Activated CD4-positive, alpha-beta T cell treated with anti-CD3 and anti-CD28 coated beads for 36 hours (primary cell): ENCODE measurements at regions of chr12 and their contacts with region 1.

Region 1: DNA sequence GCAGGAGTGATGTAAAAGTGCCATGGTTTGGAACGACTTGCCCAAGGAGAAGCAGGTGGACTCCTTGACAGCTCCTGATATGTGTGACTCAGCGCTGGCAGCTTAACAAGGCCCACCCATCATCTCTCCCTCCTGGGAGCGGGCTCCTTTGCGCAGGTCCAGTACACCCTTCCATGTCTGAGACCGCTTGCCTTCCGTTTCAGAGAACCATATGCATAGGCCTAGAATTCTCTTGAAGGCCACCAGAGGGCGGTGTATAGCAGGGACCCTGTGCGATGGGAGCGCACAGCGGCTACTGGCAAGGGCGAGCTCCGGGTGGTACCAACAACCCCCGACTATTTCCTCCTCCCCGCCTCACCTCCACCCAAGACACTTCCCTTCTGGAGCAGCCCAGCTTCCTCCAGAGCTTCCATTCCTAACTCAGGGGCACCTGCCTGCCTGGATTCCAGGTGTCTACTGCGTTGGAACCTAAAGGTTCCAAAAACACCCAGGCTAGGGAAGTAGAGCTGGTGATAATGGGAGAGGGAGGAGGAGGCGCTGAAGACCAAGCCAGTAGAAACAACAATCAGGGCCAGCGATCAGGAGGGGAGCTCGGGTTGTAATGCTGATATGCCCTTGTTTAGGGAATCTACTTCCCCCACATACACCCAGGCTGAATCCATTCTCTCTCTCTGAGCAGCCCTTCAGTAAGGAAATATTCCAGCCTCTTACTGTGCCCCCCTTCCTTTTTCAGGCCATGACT is 6.2 kb downstream of the DHH start:
- DNase-seq: peak; percentile 82
- ATAC-seq: peak; percentile 91
- H3K4me3 Mint-ChIP-seq: no peak overlapping the region
- H3K27ac Mint-ChIP-seq: no peak overlapping the region
- H3K4me1 Mint-ChIP-seq: peaks cover 35% of the 10 kb centered on the region
- H3K27me3 Mint-ChIP-seq: peaks cover 48% of the 10 kb centered on the region

Region 2: GRCh38 chr12:48882315-48882687 is 206.1 kb before region 1 on chr12:
- CTCF ChIA-PET with region 1: no interaction called
- POLR2A ChIA-PET with region 1: no interaction called
- intact Hi-C with region 1: no loop called
- DNase-seq: no peak
- ATAC-seq: no peak
- H3K4me3 Mint-ChIP-seq: no peak overlapping the region
- H3K27ac Mint-ChIP-seq: no peak overlapping the region
- H3K4me1 Mint-ChIP-seq: peaks cover 7% of the 10 kb centered on the region
- H3K27me3 Mint-ChIP-seq: peaks cover 22% of the 10 kb centered on the region

Region 3: GRCh38 chr12:48977315-48978281 is 110.8 kb before region 1 on chr12:
- CTCF ChIA-PET with region 1: interaction called, 10 read pairs
- POLR2A ChIA-PET with region 1: no interaction called
- intact Hi-C with region 1: loop called (anchors 1 to 5 kb)
- DNase-seq: peak; percentile 92
- ATAC-seq: peak; percentile 69
- H3K4me3 Mint-ChIP-seq: peak overlapping the region; percentile 42
- H3K27ac Mint-ChIP-seq: peak overlapping the region; percentile 10
- H3K4me1 Mint-ChIP-seq: peaks cover 54% of the 10 kb centered on the region
- H3K27me3 Mint-ChIP-seq: peaks cover 73% of the 10 kb centered on the region

Region 4: DNA sequence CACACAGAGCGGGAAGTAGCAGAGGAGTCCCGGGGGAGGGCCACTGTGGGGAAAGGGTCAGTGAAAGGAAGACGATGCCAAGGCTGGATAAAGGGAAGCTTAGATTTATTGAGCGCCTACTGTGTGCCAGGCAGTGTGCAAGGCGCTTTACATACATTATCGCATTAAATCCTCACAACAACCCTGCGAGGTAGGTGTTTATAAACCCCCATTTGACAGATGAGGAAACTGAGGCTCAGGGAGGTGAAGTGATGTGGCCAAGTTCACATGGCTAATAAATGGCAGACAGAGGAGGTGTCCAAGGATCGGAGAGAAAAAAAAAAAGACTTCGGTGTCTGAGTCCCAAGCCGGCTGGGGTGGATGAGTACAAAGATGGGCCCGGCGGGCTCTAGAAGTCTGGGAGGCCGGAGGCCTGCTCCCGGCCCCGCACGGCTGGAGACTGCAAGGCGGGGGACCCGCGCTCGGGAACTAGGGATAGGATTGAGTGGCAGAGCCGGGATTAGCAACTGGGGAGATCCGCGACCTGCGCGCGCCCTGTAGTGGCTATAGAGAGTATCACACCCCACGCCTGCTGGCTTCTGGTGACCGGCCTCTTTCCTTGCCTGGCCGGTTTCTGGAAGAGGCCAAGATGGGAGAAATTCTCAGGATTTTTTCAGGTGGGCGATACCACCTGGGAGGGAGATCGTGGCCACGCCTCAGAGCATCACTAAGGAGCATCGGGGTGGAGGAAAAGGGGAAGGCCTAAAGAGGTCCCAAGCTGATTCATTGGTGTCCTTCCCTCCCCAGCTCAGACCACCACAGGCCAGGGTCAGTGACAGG is 93.1 kb before region 1 on chr12:
- CTCF ChIA-PET with region 1: interaction called, 12 read pairs
- POLR2A ChIA-PET with region 1: no interaction called
- intact Hi-C with region 1: loop called (anchors 2 to 5 kb)
- DNase-seq: peak; percentile 77
- ATAC-seq: peak; percentile 13
- H3K4me3 Mint-ChIP-seq: no peak overlapping the region
- H3K27ac Mint-ChIP-seq: no peak overlapping the region
- H3K4me1 Mint-ChIP-seq: peaks cover 26% of the 10 kb centered on the region
- H3K27me3 Mint-ChIP-seq: peaks cover 52% of the 10 kb centered on the region

Region 5: DNA sequence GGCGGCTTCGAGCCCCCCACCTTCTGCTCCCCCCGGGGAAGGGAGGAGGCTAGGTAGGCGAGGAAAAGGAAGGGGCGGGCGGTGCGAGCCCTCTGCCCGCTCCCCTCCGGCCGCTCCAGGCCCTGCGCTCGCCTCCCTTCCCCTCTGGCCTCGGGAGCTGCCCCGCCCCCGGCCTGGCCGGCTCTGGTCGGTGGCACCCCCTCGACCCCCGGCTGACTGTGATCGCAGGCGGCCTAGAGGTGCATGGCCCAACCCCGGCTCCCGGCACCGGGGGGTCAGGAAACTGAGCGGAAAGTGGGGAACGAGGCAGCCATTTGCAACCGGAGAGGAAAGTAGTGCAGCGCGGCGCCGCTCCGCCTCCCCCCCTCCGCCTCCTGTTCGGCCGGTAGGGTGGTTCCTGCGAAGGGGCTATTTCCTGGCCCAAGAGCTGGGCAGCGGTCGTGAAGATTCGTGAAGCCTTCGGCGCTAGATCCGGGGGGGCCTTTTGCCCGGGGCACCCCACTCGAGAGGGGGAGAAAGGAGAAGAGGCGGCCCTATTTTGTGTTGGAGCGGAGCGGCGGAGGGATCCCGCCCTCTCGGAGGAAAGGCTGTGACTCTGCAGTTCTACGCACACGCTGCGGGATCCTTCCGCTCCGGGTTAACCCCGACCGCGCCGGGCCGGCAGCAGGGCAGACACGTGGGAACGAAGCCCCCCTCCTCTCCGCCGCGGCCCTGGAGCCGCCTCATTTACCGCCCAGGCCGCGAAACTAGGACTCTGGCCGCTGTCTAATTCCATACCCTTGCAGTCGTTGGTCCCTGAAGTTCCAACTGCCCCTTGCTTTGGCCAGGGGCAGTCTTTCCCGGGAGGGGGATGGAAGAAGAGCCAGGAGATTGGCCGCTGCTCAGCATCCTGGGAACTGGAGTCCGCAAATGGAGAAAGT is 27.9 kb before region 1 on chr12 and contains the start of gene KMT2D:
- CTCF ChIA-PET with region 1: interaction called, 124 read pairs
- POLR2A ChIA-PET with region 1: no interaction called
- intact Hi-C with region 1: loop called (anchors 1 kb)
- DNase-seq: peak; percentile 94
- ATAC-seq: peak; percentile 75
- H3K4me3 Mint-ChIP-seq: peak within 1 kb of the TSS; percentile 98
- H3K27ac Mint-ChIP-seq: peak within 1 kb of the TSS; percentile 95
- H3K4me1 Mint-ChIP-seq: peaks cover 45% of the 10 kb centered on the region
- H3K27me3 Mint-ChIP-seq: no peaks in the 10 kb centered on the region
- total RNA-seq, gene KMT2D: 48.3 to 58.2 TPM

Region 6: DNA sequence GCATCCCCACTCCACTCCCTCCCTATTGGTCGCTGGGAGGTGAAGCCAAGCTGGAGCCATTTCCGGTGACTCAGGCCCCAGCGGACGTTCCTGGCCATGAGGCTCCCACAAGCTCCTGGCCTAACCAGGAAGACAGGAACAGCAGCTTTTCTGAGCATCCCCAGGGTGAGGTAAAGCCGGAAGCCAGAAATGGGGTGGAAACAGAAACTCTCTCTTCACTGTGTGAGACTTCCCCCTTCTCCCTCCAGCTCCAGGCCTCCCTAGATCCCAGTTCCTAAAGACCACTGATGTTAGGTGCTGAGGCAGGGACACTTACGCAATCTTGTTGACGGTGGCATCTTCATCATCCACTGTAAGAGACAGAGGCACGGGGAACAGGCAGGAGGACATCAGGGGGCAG is 17.2 kb after region 1 on chr12:
- CTCF ChIA-PET with region 1: interaction called, 96 read pairs
- POLR2A ChIA-PET with region 1: interaction called, 3 read pairs
- intact Hi-C with region 1: no loop called
- DNase-seq: no peak
- ATAC-seq: no peak
- H3K4me3 Mint-ChIP-seq: no peak overlapping the region
- H3K27ac Mint-ChIP-seq: no peak overlapping the region
- H3K4me1 Mint-ChIP-seq: peaks cover 24% of the 10 kb centered on the region
- H3K27me3 Mint-ChIP-seq: no peaks in the 10 kb centered on the region

Region 7: GRCh38 chr12:49121047-49121696 is 32.8 kb after region 1 on chr12:
- CTCF ChIA-PET with region 1: interaction called, 13 read pairs
- POLR2A ChIA-PET with region 1: no interaction called
- intact Hi-C with region 1: no loop called
- DNase-seq: no peak
- ATAC-seq: peak; percentile 38
- H3K4me3 Mint-ChIP-seq: no peak overlapping the region
- H3K27ac Mint-ChIP-seq: no peak overlapping the region
- H3K4me1 Mint-ChIP-seq: no peaks in the 10 kb centered on the region
- H3K27me3 Mint-ChIP-seq: no peaks in the 10 kb centered on the region

Region 8: GRCh38 chr12:49200919-49201594 is 112.7 kb after region 1 on chr12:
- CTCF ChIA-PET with region 1: no interaction called
- POLR2A ChIA-PET with region 1: no interaction called
- intact Hi-C with region 1: no loop called
- DNase-seq: no peak
- ATAC-seq: peak; percentile 81
- H3K4me3 Mint-ChIP-seq: peak overlapping the region; percentile 16
- H3K27ac Mint-ChIP-seq: no peak overlapping the region
- H3K4me1 Mint-ChIP-seq: peaks cover 13% of the 10 kb centered on the region
- H3K27me3 Mint-ChIP-seq: peaks cover 2% of the 10 kb centered on the region

Region 9: DNA sequence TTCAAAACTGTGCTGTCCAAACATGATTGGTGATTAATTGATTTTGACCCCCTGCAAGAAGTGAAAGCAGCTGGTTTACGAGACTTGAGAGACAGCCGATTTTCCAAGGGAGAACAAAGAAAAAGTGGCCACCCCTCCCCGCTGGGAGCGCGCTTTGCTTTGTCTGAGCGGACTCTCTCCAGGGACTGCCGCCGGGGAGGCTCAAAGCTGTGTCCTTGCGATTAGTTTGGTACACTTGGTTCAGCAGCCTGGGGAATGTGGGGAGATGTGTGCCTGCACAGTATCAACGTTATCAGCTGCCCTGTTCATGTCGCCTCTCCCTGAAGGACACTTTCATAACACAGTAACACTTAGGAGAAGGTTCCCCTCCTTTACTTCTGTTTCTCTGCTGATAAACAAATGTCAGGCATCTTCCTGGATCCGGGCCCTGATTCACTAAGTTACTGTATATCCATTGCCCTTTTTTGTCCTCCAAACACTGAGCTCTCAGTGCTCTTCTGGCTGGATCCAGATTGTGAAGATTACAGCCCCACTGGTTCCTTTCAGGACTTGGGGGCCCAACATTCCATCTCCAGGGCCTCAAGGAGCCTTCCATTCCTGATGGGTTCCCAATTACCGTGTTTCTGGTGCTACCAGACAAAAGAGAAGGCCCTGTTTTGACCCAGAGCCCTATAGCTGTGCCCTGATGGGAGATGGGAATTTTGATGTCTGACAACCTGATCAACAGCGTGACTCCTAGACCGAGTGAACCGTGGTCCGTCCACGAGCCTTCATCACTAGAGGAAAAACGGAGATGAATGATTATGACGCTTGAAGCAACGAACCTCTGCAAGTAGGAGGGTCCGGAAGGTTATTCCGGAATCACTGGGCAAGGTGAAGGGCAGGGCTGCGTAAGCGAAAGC is 144.8 kb after region 1 on chr12:
- CTCF ChIA-PET with region 1: interaction called, 14 read pairs
- POLR2A ChIA-PET with region 1: interaction called, 3 read pairs
- intact Hi-C with region 1: loop called (anchors 1 kb)
- DNase-seq: no peak
- ATAC-seq: no peak
- H3K4me3 Mint-ChIP-seq: peak overlapping the region; percentile 76
- H3K27ac Mint-ChIP-seq: peak overlapping the region; percentile 83
- H3K4me1 Mint-ChIP-seq: peaks cover 20% of the 10 kb centered on the region
- H3K27me3 Mint-ChIP-seq: no peaks in the 10 kb centered on the region